Natural killer cell (primary cell): ENCODE measurements at regions of chr19 and their contacts with region 1.

Region 1: DNA sequence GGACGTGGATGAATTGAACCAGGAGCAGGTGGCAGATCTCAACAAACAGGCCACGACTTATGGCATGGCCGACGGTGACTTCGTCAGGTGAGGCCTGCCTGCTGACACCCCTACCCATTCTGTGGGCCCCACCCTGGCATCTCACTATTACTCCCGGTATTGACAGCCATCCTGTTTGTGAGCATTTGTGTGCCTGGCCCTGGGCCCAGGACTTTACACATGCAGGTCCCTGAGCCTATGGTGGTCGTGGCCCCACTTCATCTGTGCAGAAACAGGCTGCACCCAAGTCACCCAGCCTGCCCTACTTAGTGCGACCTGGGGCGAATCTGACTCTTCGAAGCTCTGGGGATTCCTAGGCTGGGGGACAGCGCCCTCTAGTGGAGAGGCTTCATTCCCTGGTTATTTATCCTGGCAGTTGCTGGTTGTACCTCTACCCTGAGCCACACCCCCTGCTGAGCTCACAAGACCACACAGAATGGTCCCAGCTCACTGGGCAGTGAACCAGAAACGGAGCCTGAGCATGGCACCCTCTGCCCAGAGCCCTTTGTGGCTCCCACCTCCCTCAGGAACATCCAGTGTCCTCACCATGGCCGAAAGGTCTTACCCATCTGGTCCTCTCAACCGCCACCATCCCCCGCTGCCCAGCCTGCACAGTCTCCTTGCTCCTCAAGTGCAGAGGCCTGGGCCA is 16.9 kb downstream of the ZNF296 start:
- DNase-seq: peak; percentile 81 to 91
- ATAC-seq: peak; percentile 87 to 92 (median 91)
- H3K4me3 ChIP-seq: no peak overlapping the region
- H3K4me3 Mint-ChIP-seq: no peak overlapping the region
- H3K27ac ChIP-seq: no peak overlapping the region
- H3K27ac Mint-ChIP-seq: peak overlapping the region in 1 of 2 donors; percentile 70
- H3K4me1 ChIP-seq: peaks cover 7% of the 10 kb centered on the region
- H3K4me1 Mint-ChIP-seq: peaks cover 8 to 22% of the 10 kb centered on the region in 2 donors
- H3K27me3 ChIP-seq: no peaks in the 10 kb centered on the region
- H3K27me3 Mint-ChIP-seq: no peaks in the 10 kb centered on the region
- CTCF ChIP-seq: peak; percentile 89

Region 2: DNA sequence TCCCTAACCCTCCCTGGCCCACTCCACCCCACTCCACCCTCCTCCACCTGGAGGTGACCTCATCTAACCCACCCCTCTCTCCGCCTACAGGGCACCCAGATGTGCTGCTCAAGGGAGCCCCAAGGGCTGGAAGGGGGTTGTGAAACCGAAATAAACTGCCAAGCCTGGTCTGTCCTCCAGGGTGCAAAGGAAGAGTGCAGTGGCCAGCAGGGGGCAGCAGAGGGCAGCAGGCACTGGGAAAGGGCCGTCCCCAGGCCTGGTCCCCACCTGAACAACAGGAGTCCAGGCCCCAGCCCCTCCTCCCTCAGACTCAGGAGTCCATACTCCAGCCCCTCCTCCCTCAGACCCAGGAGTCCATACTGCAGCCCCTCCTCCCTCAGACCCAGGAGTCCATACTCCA is 259.0 kb before region 1 on chr19:
- intact Hi-C with region 1: loop called (anchors 10 kb)
- DNase-seq: peak; percentile 83 to 87
- ATAC-seq: peak; percentile 93 to 99 (median 99)
- H3K4me3 ChIP-seq: no peak overlapping the region
- H3K4me3 Mint-ChIP-seq: no peak overlapping the region
- H3K27ac ChIP-seq: no peak overlapping the region
- H3K27ac Mint-ChIP-seq: no peak overlapping the region
- H3K4me1 ChIP-seq: peaks cover 5% of the 10 kb centered on the region
- H3K4me1 Mint-ChIP-seq: no peaks in the 10 kb centered on the region
- H3K27me3 ChIP-seq: no peaks in the 10 kb centered on the region
- H3K27me3 Mint-ChIP-seq: peaks cover 0 to 2% of the 10 kb centered on the region in 2 donors
- CTCF ChIP-seq: peak; percentile 73

Region 3: GRCh38 chr19:44903602-44904425 is 155.6 kb before region 1 on chr19:
- intact Hi-C with region 1: loop called (anchors 2 kb)
- DNase-seq: peak; percentile 79
- ATAC-seq: peak; percentile 73 to 92 (median 80)
- H3K4me3 ChIP-seq: no peak overlapping the region
- H3K4me3 Mint-ChIP-seq: no peak overlapping the region
- H3K27ac ChIP-seq: no peak overlapping the region
- H3K27ac Mint-ChIP-seq: no peak overlapping the region
- H3K4me1 ChIP-seq: peaks cover 4% of the 10 kb centered on the region
- H3K4me1 Mint-ChIP-seq: peaks cover 6 to 8% of the 10 kb centered on the region in 2 donors
- H3K27me3 ChIP-seq: peaks cover 12% of the 10 kb centered on the region
- H3K27me3 Mint-ChIP-seq: peaks cover 18 to 22% of the 10 kb centered on the region in 2 donors
- CTCF ChIP-seq: peak; percentile 98

Region 4: DNA sequence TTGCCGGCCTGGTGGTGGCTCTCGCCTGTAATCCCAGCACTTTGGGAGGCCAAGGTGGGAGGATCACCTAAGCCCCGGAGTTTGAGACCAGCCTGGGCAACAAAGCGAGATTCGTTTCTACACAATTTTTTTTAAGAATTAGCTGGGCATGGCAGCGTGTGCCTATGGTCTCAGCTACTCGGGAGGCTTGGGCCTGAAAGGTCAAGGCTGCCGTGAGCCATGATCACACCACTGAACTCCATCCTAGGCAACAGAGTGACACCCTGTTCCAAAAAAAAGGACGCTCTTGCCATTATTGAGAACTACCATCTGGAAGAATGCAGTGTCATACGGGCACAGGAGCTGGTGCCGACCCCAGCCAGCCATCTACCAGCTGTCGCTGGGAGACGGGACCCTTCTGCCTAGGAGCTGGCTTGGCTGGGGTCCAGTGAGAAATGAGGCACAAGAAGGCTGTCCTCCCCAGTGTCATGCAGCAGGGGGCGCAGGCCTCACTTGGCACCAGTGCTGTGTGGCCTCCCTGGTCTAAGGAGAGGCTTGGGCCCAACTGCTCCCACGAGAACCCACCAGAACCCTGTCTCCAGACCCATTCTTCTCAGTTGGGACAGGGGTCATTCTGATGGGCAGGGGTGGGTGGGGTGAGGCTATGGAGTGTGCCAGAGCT is 70.4 kb before region 1 on chr19:
- intact Hi-C with region 1: loop called (anchors 1 kb)
- DNase-seq: peak; percentile 48 to 82
- ATAC-seq: peak; percentile 70 to 89 (median 71)
- H3K4me3 ChIP-seq: no peak overlapping the region
- H3K4me3 Mint-ChIP-seq: no peak overlapping the region
- H3K27ac ChIP-seq: no peak overlapping the region
- H3K27ac Mint-ChIP-seq: peak overlapping the region in 1 of 2 donors; percentile 13
- H3K4me1 ChIP-seq: peaks cover 32% of the 10 kb centered on the region
- H3K4me1 Mint-ChIP-seq: peaks cover 9 to 27% of the 10 kb centered on the region in 2 donors
- H3K27me3 ChIP-seq: no peaks in the 10 kb centered on the region
- H3K27me3 Mint-ChIP-seq: no peaks in the 10 kb centered on the region
- CTCF ChIP-seq: peak; percentile 57

Region 5: DNA sequence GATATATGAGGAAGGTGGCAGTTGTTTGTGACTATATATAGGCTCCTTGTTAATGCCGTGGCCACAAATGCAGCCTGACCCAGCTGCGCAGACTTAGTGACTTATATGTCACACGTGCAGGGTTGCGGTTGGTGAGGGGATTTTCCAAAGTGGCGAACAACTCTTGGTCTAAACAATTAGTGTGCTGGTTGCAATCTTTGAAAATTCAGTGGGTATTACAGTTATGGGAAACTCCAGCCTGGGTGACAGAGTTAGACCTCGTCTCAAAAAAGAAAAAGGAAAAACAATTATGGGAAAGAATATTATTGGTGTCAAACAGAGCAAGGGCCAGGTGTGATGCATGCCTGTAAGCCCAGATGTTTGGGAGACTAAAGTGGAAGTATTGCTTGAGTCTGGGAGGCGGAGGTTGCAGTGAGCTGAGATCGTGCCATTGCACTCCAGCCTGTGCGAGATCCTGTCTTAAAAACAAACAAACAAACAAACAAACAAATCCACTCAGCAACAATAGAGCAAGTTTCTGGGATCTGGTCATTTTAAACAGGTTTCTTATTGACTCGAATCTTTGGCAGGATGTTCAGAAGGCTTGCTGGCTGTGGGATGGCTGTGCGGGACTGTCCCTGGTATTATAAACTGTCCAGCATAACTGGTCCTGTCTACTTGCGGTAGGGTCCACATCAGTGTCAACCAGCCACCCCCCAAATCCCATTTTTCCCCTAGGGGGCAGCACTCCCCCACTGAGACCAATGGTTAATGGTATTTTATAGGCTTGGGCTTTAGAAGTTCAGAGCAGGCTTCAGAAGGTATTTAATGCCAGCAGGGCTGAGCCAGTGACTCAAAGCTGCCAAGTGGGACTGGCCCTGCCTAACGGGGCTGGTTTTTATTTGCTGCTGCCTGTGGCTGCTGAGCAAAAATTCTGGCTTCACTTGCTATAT is 42.8 kb before region 1 on chr19:
- intact Hi-C with region 1: loop called (anchors 2 kb)
- DNase-seq: peak; percentile 75 to 93
- ATAC-seq: peak; percentile 76 to 90 (median 79)
- H3K4me3 ChIP-seq: no peak overlapping the region
- H3K4me3 Mint-ChIP-seq: peak overlapping the region; percentile 63
- H3K27ac ChIP-seq: peak overlapping the region; percentile 78
- H3K27ac Mint-ChIP-seq: peak overlapping the region; percentile 87 to 89
- H3K4me1 ChIP-seq: peaks cover 17% of the 10 kb centered on the region
- H3K4me1 Mint-ChIP-seq: peaks cover 8 to 14% of the 10 kb centered on the region in 2 donors
- H3K27me3 ChIP-seq: no peaks in the 10 kb centered on the region
- H3K27me3 Mint-ChIP-seq: no peaks in the 10 kb centered on the region
- CTCF ChIP-seq: peak; percentile 48